ENCODE measurements at regions of chr9 and their contacts with region 1.

Region 1: DNA sequence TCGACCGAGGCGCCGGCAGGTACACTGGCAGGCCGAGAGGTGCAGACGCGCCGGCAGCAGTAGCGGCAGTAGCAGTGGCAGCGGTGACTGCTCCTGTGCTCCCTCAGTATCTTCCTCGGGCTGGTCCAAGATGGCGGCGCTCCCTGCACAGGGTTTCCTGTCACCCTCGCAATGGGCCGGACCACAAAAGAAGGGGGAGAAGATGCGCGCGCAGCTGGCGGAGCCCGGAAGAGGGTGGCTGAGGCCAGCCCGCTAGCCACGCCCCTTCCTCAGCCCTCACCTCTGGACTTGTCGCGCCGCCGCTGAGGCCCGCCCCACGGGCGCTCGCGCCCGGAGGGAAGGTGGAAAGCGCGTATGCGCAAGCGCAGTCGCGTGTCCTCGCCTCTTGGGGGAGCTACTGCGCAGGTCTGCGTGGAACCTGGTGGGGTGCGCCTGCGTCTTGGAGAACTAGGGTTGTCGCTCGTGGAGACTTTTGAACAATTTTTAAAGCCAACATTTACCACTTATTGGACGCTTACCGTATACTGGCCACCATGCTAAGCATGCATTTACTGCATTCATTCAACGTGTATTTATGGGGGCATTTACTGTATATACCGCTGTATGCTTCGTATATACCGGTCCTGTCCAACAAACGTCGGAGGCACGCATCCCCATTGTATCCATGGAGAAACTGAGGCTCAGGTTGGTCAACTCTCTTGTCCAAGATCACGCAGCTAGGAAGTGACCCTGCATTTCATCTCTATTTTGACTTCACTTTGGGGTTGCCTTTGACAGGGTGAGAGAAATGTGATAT is at the start of gene RAB14:
- DNase-seq: peak; percentile 97
- H3K4me3 ChIP-seq: peak within 1 kb of the TSS; percentile 69 to 97 (median 85)
- H3K27ac ChIP-seq: peak within 1 kb of the TSS; percentile 64
- H3K4me1 ChIP-seq: peaks cover 28% of the 10 kb centered on the region
- H3K27me3 ChIP-seq: no peaks in the 10 kb centered on the region
- CTCF ChIP-seq: peak; percentile 26 to 68
- total RNA-seq, gene RAB14: 27.5 to 74.6 TPM

Region 2: DNA sequence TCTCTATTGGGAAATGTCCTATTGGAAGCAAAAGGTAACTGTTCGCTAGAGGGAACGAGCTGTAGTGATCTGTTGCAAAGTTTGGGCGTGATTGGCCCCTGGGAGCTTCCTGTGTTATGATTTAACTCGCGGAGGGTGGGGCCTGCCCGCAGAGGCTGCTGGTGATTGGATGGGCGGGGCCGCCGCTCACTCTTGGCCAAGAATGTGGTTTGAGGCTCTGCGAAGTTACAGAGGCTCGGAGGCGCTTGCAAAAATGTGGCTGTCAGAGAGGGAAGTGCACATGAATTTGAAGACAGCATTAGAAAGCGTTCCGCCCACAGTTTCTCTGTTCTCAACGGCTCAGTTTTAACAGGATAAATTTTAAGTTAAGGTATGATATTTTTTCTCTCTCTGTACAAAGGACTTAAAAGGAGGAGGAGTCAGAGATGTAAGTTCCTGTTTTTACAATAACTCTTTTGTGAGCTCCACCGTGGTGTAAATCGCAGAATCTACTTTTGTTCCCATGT is 80.3 kb before region 1 on chr9:
- CTCF ChIA-PET with region 1: no interaction called
- dilution Hi-C with region 1: no loop called
- in situ Hi-C with region 1: no loop called
- intact Hi-C with region 1: loop called (anchors 5 kb)
- DNase-seq: peak; percentile 96
- H3K4me3 ChIP-seq: peak overlapping the region; percentile 49 to 88 (median 58)
- H3K27ac ChIP-seq: peak overlapping the region; percentile 71
- H3K4me1 ChIP-seq: peaks cover 11% of the 10 kb centered on the region
- H3K27me3 ChIP-seq: no peaks in the 10 kb centered on the region
- CTCF ChIP-seq: peak in 1 of 2 donors; percentile 37

Region 3: DNA sequence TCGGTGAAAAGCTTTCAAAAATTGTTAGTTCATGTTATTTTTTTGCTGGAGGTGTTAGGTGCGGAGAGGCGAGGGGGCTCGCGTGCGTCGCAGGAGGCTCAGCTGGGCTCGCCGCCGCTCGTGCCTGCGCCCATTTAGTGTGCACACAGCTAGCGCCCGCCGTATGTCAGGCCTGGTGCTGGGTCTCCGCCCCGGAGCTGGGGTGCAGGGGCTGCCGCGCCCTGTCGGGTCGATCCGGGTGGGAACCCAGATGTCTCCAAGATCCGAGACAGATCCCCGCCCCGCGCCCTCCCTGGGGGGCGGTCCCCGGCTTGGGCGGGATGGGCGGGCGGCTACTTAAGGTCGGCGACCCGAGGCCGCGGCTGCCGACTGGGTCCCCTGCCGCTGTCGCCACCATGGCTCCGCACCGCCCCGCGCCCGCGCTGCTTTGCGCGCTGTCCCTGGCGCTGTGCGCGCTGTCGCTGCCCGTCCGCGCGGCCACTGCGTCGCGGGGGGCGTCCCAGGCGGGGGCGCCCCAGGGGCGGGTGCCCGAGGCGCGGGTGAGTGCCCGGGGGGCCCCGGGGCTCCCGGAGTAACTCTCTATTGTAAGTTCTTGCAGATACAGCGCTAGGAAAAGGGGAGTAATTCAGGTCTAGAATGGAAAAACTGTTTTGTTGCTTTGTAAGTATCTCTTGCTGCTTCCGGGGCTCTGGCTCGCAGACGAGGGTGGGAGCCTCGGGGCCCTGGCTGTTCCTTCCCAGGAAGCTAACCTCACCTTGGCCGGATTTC is 97.7 kb after region 1 on chr9:
- CTCF ChIA-PET with region 1: no interaction called
- dilution Hi-C with region 1: no loop called
- in situ Hi-C with region 1: loop called in 1 of 2 experiments (anchors 10 kb)
- intact Hi-C with region 1: no loop called
- DNase-seq: peak; percentile 19
- H3K4me3 ChIP-seq: peak overlapping the region; percentile 34 to 49 (median 40)
- H3K27ac ChIP-seq: no peak overlapping the region
- H3K4me1 ChIP-seq: peaks cover 11% of the 10 kb centered on the region
- H3K27me3 ChIP-seq: no peaks in the 10 kb centered on the region
- CTCF ChIP-seq: no peak

Measured in mammary epithelial cell (primary cell).